GM10248 (cell line): ENCODE measurements at regions of chr6 and their contacts with region 1.

Region 1: DNA sequence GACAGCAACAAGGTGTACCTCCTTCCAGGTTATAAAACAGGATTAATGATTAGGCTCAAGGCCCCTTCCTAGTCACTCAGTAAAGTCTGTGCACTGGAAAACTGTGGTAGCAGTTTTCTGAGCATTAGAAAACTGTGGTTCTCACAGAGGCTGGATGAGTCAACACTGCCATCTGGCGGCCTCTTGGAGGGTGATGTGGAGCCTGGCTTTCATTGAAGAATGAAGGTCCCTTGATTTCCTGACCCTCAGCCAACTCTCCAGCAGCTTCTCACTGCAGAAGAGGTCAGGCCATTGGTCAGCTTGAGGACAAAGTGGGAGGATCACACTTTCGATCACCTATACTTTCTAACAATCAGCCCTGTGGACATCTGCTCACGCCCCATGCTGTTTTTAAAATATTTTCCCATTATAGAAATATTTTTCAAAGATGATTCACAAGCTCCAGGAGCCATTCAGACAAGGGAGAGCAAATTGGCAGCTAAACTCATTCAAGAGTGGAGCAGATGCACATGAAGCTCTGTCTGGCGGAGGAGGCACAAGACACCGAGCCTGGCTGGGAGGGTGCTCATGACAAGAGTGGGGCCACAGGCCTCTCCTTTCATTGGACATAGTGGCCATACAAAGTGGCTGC is 23.2 kb downstream of the PSMB1 start:
- DNase-seq: peak; percentile 70
- CTCF ChIP-seq: peak; percentile 84

Region 2: GRCh38 chr6:169800668-169801395 is 729.1 kb before region 1 on chr6:
- CTCF ChIA-PET with region 1: interaction called, 10 read pairs
- POLR2A ChIA-PET with region 1: no interaction called
- DNase-seq: no peak
- CTCF ChIP-seq: no peak

Region 3: GRCh38 chr6:170405311-170405975 is 124.5 kb before region 1 on chr6:
- CTCF ChIA-PET with region 1: no interaction called
- POLR2A ChIA-PET with region 1: no interaction called
- DNase-seq: no peak
- CTCF ChIP-seq: no peak

Region 4: GRCh38 chr6:170489836-170490235 is 40.1 kb before region 1 on chr6:
- CTCF ChIA-PET with region 1: no interaction called
- POLR2A ChIA-PET with region 1: no interaction called
- DNase-seq: no peak
- CTCF ChIP-seq: no peak

Region 5: GRCh38 chr6:170545405-170545804 is 15.5 kb after region 1 on chr6:
- CTCF ChIA-PET with region 1: interaction called, 24 read pairs
- POLR2A ChIA-PET with region 1: interaction called, 11 read pairs
- DNase-seq: no peak
- CTCF ChIP-seq: no peak

Region 6: GRCh38 chr6:170575250-170575649 is 45.3 kb after region 1 on chr6:
- CTCF ChIA-PET with region 1: no interaction called
- POLR2A ChIA-PET with region 1: no interaction called
- DNase-seq: no peak
- CTCF ChIP-seq: peak; percentile 30

Region 7: GRCh38 chr6:170605574-170606259 is 75.8 kb after region 1 on chr6:
- CTCF ChIA-PET with region 1: no interaction called
- POLR2A ChIA-PET with region 1: no interaction called
- DNase-seq: no peak
- CTCF ChIP-seq: no peak